Endothelial cell of umbilical vein (primary cell): ENCODE measurements at regions of chr3 and their contacts with region 1.

Region 1: DNA sequence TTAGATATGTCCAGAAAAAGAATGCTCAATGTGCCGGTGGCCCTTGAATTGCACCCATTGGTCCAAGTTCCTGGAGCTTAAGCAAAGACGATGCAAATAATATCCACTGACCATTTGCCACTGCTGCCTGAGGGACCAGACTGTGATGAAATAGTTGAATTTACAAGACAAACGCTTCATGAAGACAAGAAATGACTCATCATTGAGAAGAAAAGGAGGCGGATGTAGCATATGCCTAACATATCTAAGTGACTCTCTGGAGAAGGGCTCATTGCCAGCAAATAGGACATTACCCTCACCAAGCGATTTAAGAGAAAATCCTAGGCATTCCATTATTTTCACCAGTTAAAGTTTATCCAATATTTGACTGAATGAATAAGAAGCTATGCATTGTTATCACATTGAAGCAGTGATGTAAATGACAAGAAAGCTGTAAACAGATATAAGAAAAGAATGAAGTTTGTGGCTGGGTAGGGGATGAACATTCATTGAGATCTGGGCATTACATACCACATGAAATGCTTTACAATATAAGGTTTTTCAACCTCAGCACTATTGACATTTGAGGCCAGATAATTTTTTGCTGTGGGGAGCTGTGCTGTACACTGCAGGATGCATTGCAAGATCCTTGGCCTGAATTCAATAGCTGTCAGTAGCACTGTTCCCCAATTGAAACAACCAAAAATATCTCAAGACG is 48.9 kb upstream of the CPNE4 start:
- DNase-seq: peak; percentile 62
- H3K4me3 ChIP-seq: no peak overlapping the region
- H3K27ac ChIP-seq: no peak overlapping the region
- H3K4me1 ChIP-seq: no peaks in the 10 kb centered on the region
- H3K27me3 ChIP-seq: no peaks in the 10 kb centered on the region
- CTCF ChIP-seq: no peak
- POLR2A ChIP-seq: no peak

Region 2: GRCh38 chr3:132135628-132136333 is 52.0 kb after region 1 on chr3:
- CTCF ChIA-PET with region 1: no interaction called
- POLR2A ChIA-PET with region 1: no interaction called
- dilution Hi-C with region 1: no loop called
- intact Hi-C with region 1: loop called (anchors 1 kb)
- DNase-seq: peak; percentile 75
- H3K4me3 ChIP-seq: no peak overlapping the region
- H3K27ac ChIP-seq: peak overlapping the region; percentile 92
- H3K4me1 ChIP-seq: peaks cover 26% of the 10 kb centered on the region
- H3K27me3 ChIP-seq: peaks cover 0 to 2% of the 10 kb centered on the region in 2 experiments
- CTCF ChIP-seq: no peak
- POLR2A ChIP-seq: no peak